K562 (cell line): ENCODE measurements at regions of chr5 and their contacts with region 1.

Region 1: GRCh38 chr5:149731639-149732323 is 1.7 kb downstream of the PPARGC1B start:
- DNase-seq: peak; percentile 75 to 97 (median 84)
- ATAC-seq: peak; percentile 70
- H3K4me3 ChIP-seq: peak overlapping the region; percentile 78
- H3K27ac ChIP-seq: peak overlapping the region; percentile 82
- H3K4me1 ChIP-seq: peaks cover 16 to 32% of the 10 kb centered on the region in 2 experiments; a peak in 4 of 5 replicates
- H3K27me3 ChIP-seq: no peaks in the 10 kb centered on the region
- CTCF ChIP-seq: no peak
- EP300 ChIP-seq: no peak
- POLR2A ChIP-seq: peak; percentile 53
- RAD21 ChIP-seq: no peak; a peak in 1 of 4 replicates

Region 2: GRCh38 chr5:149367249-149367971 is 364.4 kb before region 1 on chr5:
- CTCF ChIA-PET with region 1: no interaction called
- POLR2A ChIA-PET with region 1: no interaction called
- in situ Hi-C with region 1: no loop called
- intact Hi-C with region 1: no loop called
- DNase-seq: peak; percentile 74 to 90 (median 81)
- ATAC-seq: peak; percentile 90
- H3K4me3 ChIP-seq: no peak overlapping the region
- H3K27ac ChIP-seq: no peak overlapping the region
- H3K4me1 ChIP-seq: peaks cover 23 to 25% of the 10 kb centered on the region in 2 experiments; a peak in 4 of 5 replicates
- H3K27me3 ChIP-seq: no peaks in the 10 kb centered on the region
- CTCF ChIP-seq: peak; percentile 96 to 97 (median 96)
- EP300 ChIP-seq: no peak
- POLR2A ChIP-seq: no peak
- RAD21 ChIP-seq: peak; percentile 62 to 85

Region 3: DNA sequence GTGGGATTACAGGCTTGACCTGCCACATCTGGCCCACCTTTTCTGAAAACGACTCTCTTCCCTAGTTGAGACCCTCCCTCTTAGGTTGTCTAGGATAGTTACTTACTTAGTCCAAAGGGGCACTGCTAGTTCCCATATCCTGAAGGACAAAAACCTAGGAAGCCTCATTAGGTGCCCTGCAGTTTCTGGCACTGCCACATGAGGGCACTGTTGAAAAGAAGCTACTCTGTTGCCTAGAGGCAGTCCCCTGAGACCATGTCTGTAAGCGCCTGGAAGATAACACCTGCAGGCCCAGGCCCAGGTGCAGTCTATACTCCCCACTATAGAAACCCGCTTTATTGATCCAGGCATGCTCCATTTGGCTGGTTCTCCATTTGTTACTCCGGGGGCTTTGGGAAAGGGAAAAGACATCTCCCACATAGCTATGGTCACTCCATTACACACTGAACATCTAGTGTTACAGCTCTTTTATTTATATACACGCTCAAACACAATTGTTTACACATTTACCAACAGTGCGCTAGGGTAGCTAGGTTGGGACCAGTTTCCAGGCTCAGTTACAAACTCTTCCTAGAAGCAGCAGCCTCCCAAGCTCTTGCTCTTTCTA is 75.1 kb before region 1 on chr5:
- CTCF ChIA-PET with region 1: interaction called, 8 read pairs
- POLR2A ChIA-PET with region 1: interaction called, 3 read pairs
- in situ Hi-C with region 1: no loop called
- intact Hi-C with region 1: loop called (anchors 2 kb)
- DNase-seq: peak; percentile 58 to 70 (median 62)
- ATAC-seq: peak; percentile 80
- H3K4me3 ChIP-seq: no peak overlapping the region
- H3K27ac ChIP-seq: no peak overlapping the region
- H3K4me1 ChIP-seq: peaks cover 0 to 9% of the 10 kb centered on the region in 2 experiments; a peak in 2 of 5 replicates
- H3K27me3 ChIP-seq: no peaks in the 10 kb centered on the region; a peak in 1 of 5 replicates
- CTCF ChIP-seq: peak; percentile 81 to 91 (median 91)
- EP300 ChIP-seq: no peak
- POLR2A ChIP-seq: no peak
- RAD21 ChIP-seq: peak; percentile 77 to 88

Region 4: GRCh38 chr5:149667084-149667828 is 64.5 kb before region 1 on chr5:
- CTCF ChIA-PET with region 1: interaction called, 3 read pairs
- POLR2A ChIA-PET with region 1: no interaction called
- in situ Hi-C with region 1: no loop called
- intact Hi-C with region 1: loop called (anchors 1 kb)
- DNase-seq: peak; percentile 65 to 74 (median 66)
- ATAC-seq: peak; percentile 68
- H3K4me3 ChIP-seq: no peak overlapping the region
- H3K27ac ChIP-seq: peak overlapping the region; percentile 13; the same call in 1 of the 3 replicates
- H3K4me1 ChIP-seq: peaks cover 15 to 22% of the 10 kb centered on the region in 2 experiments
- H3K27me3 ChIP-seq: no peaks in the 10 kb centered on the region
- CTCF ChIP-seq: peak; percentile 72 to 96 (median 83)
- EP300 ChIP-seq: no peak
- POLR2A ChIP-seq: no peak
- RAD21 ChIP-seq: peak; percentile 54 to 78

Region 5: GRCh38 chr5:149809931-149810617 is 78.3 kb after region 1 on chr5:
- CTCF ChIA-PET with region 1: no interaction called
- POLR2A ChIA-PET with region 1: no interaction called
- in situ Hi-C with region 1: no loop called
- intact Hi-C with region 1: loop called (anchors 5 kb)
- DNase-seq: peak in 2 of 4 experiments; percentile 34 to 41
- ATAC-seq: no peak
- H3K4me3 ChIP-seq: no peak overlapping the region
- H3K27ac ChIP-seq: peak overlapping the region; percentile 58
- H3K4me1 ChIP-seq: peaks cover 48 to 69% of the 10 kb centered on the region in 2 experiments
- H3K27me3 ChIP-seq: no peaks in the 10 kb centered on the region
- CTCF ChIP-seq: no peak
- EP300 ChIP-seq: no peak
- POLR2A ChIP-seq: no peak
- RAD21 ChIP-seq: no peak

Region 6: GRCh38 chr5:149828161-149828884 is 96.5 kb after region 1 on chr5:
- CTCF ChIA-PET with region 1: interaction called, 4 read pairs
- POLR2A ChIA-PET with region 1: no interaction called
- in situ Hi-C with region 1: no loop called
- intact Hi-C with region 1: loop called (anchors 1 kb)
- DNase-seq: peak; percentile 73 to 89 (median 78)
- ATAC-seq: peak; percentile 97
- H3K4me3 ChIP-seq: no peak overlapping the region
- H3K27ac ChIP-seq: no peak overlapping the region
- H3K4me1 ChIP-seq: no peaks in the 10 kb centered on the region; a peak in 1 of 5 replicates
- H3K27me3 ChIP-seq: no peaks in the 10 kb centered on the region
- CTCF ChIP-seq: peak; percentile 84 to 91 (median 87)
- EP300 ChIP-seq: no peak
- POLR2A ChIP-seq: no peak
- RAD21 ChIP-seq: peak; percentile 97 to 98

Region 7: DNA sequence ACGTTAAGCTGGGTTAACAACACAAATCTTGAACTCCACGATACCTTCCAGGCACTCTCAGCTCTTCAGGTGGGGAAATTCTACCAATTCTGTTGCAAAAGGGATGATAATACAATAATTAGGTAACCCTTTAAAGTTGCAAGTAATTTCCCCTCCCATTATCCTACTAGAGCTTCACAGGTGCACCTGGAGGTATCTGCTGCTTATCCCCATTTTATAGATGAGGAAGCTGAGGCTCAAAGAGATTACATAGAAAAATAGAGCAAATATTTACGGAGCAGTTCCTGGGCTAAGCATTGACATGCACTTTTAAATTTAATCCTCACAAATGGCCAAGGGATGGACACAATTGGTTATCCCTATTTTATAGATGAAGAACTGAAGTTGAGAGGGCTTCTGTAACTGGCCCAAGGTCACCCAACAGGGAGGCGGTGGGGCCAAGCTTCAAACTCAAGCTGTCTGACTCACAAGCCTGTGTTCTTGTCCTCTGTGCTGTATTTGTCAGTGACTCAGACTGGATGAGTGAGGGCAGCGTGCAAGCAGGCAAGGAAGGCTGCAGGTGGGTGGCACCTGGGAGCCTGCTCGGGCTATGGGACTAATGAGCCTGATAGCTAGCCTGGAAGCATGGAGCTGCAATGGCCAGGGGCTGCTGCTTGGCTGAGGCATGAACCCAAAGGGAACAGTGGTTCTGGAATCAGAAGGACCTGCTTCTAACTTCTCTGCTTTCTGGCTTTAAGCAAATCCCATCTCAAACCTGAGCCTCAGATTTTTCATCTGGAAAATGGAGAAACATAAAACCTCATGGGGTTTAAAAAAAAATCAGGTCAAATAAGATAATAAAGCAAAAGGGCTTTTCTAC is 107.3 kb after region 1 on chr5:
- CTCF ChIA-PET with region 1: no interaction called
- POLR2A ChIA-PET with region 1: no interaction called
- in situ Hi-C with region 1: no loop called
- intact Hi-C with region 1: no loop called
- DNase-seq: no peak
- ATAC-seq: no peak
- H3K4me3 ChIP-seq: no peak overlapping the region
- H3K27ac ChIP-seq: no peak overlapping the region
- H3K4me1 ChIP-seq: peaks cover 0 to 2% of the 10 kb centered on the region in 2 experiments; a peak in 1 of 5 replicates
- H3K27me3 ChIP-seq: no peaks in the 10 kb centered on the region
- CTCF ChIP-seq: no peak
- EP300 ChIP-seq: no peak
- POLR2A ChIP-seq: no peak
- RAD21 ChIP-seq: no peak

Region 8: DNA sequence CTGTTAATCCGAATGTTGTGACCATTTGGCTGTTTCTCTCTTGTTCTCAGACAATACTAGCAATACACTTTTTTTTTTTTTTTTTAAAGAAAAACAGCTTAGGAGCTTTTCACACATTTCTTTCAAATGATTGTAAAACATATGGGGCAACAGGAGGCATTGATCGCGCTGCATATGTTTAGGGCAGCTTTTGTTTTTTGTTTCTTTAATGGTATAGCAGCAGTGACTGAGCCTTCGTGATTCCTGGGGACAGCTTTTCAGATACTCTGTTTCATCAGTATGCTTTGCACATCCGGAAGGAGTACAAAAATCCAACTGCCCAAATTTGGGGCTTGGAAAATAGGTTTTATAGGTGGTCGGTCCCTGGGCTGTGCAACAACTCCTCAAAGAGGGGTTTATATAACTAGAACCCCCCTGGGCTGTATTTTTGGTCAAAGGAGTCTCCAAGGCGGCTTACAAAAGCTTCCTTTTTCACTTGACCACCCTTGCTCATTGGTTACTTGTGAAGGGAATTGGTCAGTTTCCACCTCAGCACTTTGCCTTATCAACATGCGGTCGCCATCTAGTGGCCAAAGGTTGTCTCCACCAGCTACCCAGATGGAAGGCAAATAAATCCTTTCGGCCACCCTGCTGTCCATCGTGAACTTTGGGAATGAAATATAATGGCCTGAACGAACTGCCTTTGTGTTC is 121.0 kb after region 1 on chr5:
- CTCF ChIA-PET with region 1: no interaction called
- POLR2A ChIA-PET with region 1: no interaction called
- in situ Hi-C with region 1: no loop called
- intact Hi-C with region 1: no loop called
- DNase-seq: peak; percentile 68 to 82 (median 71)
- ATAC-seq: peak; percentile 96
- H3K4me3 ChIP-seq: no peak overlapping the region
- H3K27ac ChIP-seq: no peak overlapping the region; the same call in 2 of the 3 replicates
- H3K4me1 ChIP-seq: no peaks in the 10 kb centered on the region
- H3K27me3 ChIP-seq: no peaks in the 10 kb centered on the region
- CTCF ChIP-seq: peak; percentile 81 to 94 (median 87)
- EP300 ChIP-seq: no peak
- POLR2A ChIP-seq: no peak
- RAD21 ChIP-seq: peak; percentile 69 to 81